Heart left ventricle (tissue), 16 donors: ENCODE measurements at regions of chr9 and their contacts with region 1.

Region 1: GRCh38 chr9:12290166-12290869 is 402.9 kb upstream of the TYRP1 start:
- DNase-seq: peak in 1 of 5 donors; percentile 42
- ATAC-seq: no peak
- H3K4me3 ChIP-seq: no peak overlapping the region
- H3K27ac ChIP-seq: no peak overlapping the region
- H3K4me1 ChIP-seq: no peaks in the 10 kb centered on the region
- H3K27me3 ChIP-seq: no peaks in the 10 kb centered on the region
- CTCF ChIP-seq: no peak
- POLR2A ChIP-seq: no peak

Region 2: GRCh38 chr9:12230708-12231107 is 59.6 kb before region 1 on chr9:
- intact Hi-C with region 1: no loop called
- DNase-seq: no peak
- ATAC-seq: no peak
- H3K4me3 ChIP-seq: no peak overlapping the region
- H3K27ac ChIP-seq: no peak overlapping the region
- H3K4me1 ChIP-seq: no peaks in the 10 kb centered on the region
- H3K27me3 ChIP-seq: no peaks in the 10 kb centered on the region
- CTCF ChIP-seq: no peak
- POLR2A ChIP-seq: no peak

Region 3: GRCh38 chr9:12266758-12267157 is 23.6 kb before region 1 on chr9:
- intact Hi-C with region 1: no loop called
- DNase-seq: no peak
- ATAC-seq: no peak
- H3K4me3 ChIP-seq: no peak overlapping the region
- H3K27ac ChIP-seq: no peak overlapping the region
- H3K4me1 ChIP-seq: no peaks in the 10 kb centered on the region
- H3K27me3 ChIP-seq: no peaks in the 10 kb centered on the region
- CTCF ChIP-seq: no peak
- POLR2A ChIP-seq: no peak

Region 4: DNA sequence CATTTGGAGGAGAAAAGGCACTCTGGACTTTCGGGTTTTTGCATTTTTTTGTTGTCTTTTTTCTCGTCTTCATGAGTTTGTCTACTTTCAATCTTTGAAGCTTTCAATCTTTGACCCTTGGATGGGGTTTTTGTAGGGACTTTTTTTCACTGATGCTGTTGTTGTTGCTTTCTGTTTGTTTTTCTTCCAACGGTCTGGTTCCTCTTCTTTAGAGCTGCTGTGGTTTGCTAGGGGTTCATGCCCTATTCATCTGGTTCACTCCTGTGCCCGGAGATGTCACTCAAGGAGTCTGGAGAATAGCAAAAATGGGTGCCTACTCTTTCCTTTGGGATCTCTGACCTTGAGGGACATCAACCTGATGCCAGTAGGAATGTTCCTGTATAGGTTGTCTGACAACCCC is 24.3 kb after region 1 on chr9:
- intact Hi-C with region 1: loop called in 1 of 10 experiments (anchors 2 kb)
- DNase-seq: no peak
- ATAC-seq: no peak
- H3K4me3 ChIP-seq: no peak overlapping the region
- H3K27ac ChIP-seq: no peak overlapping the region
- H3K4me1 ChIP-seq: no peaks in the 10 kb centered on the region
- H3K27me3 ChIP-seq: no peaks in the 10 kb centered on the region
- CTCF ChIP-seq: no peak
- POLR2A ChIP-seq: no peak

Region 5: DNA sequence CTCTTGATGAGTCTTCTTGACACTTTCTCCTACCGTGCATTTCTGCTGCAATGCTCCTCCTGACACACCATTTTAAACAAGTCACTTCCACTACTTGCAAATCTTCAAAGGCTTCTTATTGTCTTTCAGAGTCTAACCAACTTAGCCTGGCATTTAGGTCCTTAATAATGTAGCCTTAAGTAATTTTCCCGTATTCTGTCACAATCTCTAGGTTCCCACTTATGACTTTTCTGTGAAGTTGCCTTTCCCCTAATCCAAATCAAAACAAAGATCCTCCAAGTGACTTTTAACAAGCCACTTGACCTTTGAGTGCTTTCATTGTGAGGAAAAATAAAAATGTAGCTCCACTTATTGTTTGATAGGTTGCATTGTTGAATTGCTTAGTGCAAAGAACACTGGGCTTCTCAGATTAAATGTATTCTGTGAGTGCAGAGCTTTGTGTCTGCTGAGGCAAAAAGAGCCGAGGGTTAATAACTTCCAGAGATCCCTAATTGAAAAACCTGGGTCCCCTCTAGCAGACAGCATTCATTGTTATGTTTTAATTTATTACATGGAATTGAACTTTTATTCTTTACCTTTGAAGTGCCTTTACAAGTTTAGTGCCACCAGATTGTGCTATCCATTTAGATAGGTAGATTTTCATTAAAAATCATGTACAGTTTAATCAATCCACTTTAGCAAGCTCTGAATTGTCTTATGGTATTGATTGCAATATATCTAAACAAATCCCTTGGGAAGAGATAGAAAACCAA is 61.2 kb after region 1 on chr9:
- intact Hi-C with region 1: no loop called
- DNase-seq: no peak
- ATAC-seq: no peak
- H3K4me3 ChIP-seq: no peak overlapping the region
- H3K27ac ChIP-seq: no peak overlapping the region
- H3K4me1 ChIP-seq: no peaks in the 10 kb centered on the region
- H3K27me3 ChIP-seq: no peaks in the 10 kb centered on the region
- CTCF ChIP-seq: no peak
- POLR2A ChIP-seq: no peak